ENCODE measurements at regions of chr2 and their contacts with region 1.

Region 1: GRCh38 chr2:223797811-223798721 is 39.3 kb downstream of the AP1S3 start:
- H3K4me3 ChIP-seq: no peak overlapping the region
- H3K27ac ChIP-seq: no peak overlapping the region
- H3K4me1 ChIP-seq: no peaks in the 10 kb centered on the region
- CTCF ChIP-seq: peak; percentile 86

Region 2: GRCh38 chr2:222972420-222972819 is 825.6 kb before region 1 on chr2:
- CTCF ChIA-PET with region 1: interaction called, 11 read pairs
- POLR2A ChIA-PET with region 1: no interaction called
- H3K4me3 ChIP-seq: no peak overlapping the region
- H3K27ac ChIP-seq: no peak overlapping the region
- H3K4me1 ChIP-seq: no peaks in the 10 kb centered on the region
- CTCF ChIP-seq: no peak

Region 3: DNA sequence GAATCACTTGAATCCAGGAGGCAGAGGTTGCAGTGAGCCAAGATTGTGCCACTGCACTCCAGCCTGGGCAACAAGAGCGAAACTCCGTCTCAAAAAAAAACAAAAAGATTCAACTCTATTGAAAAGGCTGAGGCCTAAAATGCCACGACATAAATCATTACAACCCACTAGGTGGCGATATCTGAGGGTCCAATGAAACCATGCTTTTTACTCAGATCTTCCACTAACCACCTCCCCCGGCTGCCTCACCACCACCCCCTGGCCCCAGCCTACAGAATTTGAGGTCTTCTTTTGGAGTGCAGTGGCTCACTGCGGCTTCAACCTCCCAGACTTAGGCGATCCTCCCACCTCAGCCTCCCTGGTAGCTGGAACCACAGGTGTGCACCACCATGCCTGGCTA is 18.2 kb before region 1 on chr2:
- CTCF ChIA-PET with region 1: interaction called, 11 read pairs
- POLR2A ChIA-PET with region 1: no interaction called
- H3K4me3 ChIP-seq: no peak overlapping the region
- H3K27ac ChIP-seq: no peak overlapping the region
- H3K4me1 ChIP-seq: no peaks in the 10 kb centered on the region
- CTCF ChIP-seq: 0 out of 2 replicates have a peak, but pooled peaks have one; percentile 22

Region 4: GRCh38 chr2:223839403-223840010 is 41.4 kb after region 1 on chr2:
- CTCF ChIA-PET with region 1: interaction called, 10 read pairs
- POLR2A ChIA-PET with region 1: no interaction called
- H3K4me3 ChIP-seq: no peak overlapping the region
- H3K27ac ChIP-seq: no peak overlapping the region
- H3K4me1 ChIP-seq: no peaks in the 10 kb centered on the region; the same call in 1 of the 2 replicates
- CTCF ChIP-seq: no peak

Region 5: GRCh38 chr2:224195925-224196571 is 398.0 kb after region 1 on chr2:
- CTCF ChIA-PET with region 1: no interaction called
- POLR2A ChIA-PET with region 1: no interaction called
- H3K4me3 ChIP-seq: no peak overlapping the region
- H3K27ac ChIP-seq: no peak overlapping the region
- H3K4me1 ChIP-seq: no peaks in the 10 kb centered on the region
- CTCF ChIP-seq: no peak

Measured in HEK293 (cell line).